ENCODE measurements at regions of chr6 and their contacts with region 1.

Region 1: DNA sequence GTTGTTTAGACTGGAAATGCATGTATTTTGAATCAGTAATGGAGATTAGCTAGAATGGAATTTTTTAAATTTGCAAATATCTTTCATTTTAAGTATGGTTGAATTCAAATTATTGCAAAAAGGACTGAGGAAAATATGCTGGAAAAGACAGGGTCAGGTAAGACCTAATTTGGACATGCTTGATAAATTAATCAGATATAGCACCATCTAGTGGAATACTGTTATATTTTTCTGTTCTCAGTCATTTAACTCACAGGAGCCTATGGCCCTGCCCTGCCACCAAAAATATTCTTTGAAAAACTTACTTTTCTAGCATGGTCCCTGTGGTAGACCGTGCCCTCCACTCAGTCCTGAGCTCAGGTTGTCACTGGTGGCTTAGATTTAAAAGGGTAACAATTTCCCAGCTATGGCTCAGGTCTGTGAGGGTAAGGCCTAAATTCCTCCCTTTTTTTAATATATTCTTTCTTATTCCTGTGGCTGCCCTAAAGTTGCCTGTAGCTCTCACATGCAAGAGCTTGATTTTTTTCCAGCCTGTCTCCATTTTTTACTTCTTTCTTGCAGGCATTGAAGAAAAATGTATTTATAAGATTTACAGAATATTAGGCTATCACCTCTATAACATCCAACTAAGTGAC is 25.3 kb upstream of the KIAA1586 start:
- H3K4me3 ChIP-seq: no peak overlapping the region
- H3K27ac ChIP-seq: no peak overlapping the region
- H3K4me1 ChIP-seq: no peaks in the 10 kb centered on the region
- CTCF ChIP-seq: no peak

Region 2: GRCh38 chr6:56877922-56878321 is 143.3 kb before region 1 on chr6:
- CTCF ChIA-PET with region 1: no interaction called
- POLR2A ChIA-PET with region 1: no interaction called
- H3K4me3 ChIP-seq: no peak overlapping the region
- H3K27ac ChIP-seq: no peak overlapping the region
- H3K4me1 ChIP-seq: no peaks in the 10 kb centered on the region
- CTCF ChIP-seq: no peak

Region 3: GRCh38 chr6:56995347-56995902 is 25.8 kb before region 1 on chr6:
- CTCF ChIA-PET with region 1: interaction called, 13 read pairs
- POLR2A ChIA-PET with region 1: no interaction called
- H3K4me3 ChIP-seq: no peak overlapping the region
- H3K27ac ChIP-seq: no peak overlapping the region
- H3K4me1 ChIP-seq: no peaks in the 10 kb centered on the region
- CTCF ChIP-seq: no peak

Region 4: DNA sequence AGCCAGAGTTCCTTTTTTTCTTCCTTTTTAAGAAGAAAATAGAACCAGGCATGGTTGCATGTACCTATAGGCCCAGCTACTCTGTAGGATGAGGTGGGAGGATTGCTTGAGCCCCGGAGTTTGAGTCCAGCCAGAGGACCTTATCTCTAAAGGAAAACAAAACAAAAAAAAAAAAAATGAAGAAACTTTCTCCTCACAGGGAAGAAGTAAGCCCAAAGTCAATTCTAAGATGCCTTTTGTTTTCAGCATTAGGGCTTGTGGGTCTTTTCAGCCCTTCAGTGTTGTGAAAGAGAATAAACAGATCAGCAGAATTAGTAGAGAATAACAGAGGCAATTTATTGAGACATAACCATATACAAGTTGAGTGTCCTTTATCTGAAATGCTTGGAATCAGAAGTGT is 95.6 kb after region 1 on chr6:
- CTCF ChIA-PET with region 1: no interaction called
- POLR2A ChIA-PET with region 1: no interaction called
- H3K4me3 ChIP-seq: no peak overlapping the region
- H3K27ac ChIP-seq: no peak overlapping the region
- H3K4me1 ChIP-seq: peaks cover 7% of the 10 kb centered on the region; the same call in 1 of the 2 replicates
- CTCF ChIP-seq: no peak